ENCODE measurements at regions of chr13 and their contacts with region 1.

Region 1: GRCh38 chr13:77026818-77027585 is at the start of gene FBXL3:
- DNase-seq: peak; percentile 94
- ATAC-seq: peak; percentile 88
- total RNA-seq, gene FBXL3: 29.3 TPM

Region 2: DNA sequence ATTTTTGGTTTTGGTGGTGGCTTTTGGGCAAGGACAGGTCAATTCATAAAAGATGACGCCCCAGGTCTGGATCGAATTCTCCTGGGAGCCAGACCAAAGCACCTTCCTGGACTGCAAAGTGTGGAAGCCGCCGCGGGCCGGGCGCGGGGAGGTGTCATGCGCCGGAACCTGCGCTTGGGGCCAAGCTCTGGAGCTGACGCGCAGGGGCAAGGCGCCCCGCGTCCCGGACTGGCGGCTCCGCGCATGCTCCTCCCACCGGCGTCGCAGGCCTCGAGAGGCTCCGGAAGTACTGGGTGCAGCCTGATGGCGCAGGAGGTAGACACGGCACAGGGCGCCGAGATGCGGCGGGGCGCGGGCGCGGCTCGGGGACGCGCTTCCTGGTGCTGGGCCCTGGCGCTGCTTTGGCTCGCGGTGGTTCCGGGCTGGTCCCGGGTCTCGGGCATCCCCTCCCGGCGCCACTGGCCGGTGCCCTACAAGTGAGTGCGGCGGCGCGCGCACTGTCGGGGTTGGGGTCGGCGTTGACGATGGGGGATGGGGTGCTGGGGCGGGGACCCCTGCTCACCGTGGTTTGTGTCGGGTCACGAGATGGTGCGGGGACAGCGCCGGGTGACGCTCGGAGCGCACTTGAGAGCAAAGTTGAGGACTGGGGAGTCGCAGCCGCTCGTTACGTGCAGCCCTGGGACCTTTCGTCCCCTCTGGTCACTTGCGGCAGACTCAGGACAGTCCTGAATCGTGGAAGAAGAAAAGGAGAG is 35.0 kb before region 1 on chr13 and contains the start of gene CLN5:
- intact Hi-C with region 1: loop called (anchors 1 kb)
- DNase-seq: peak; percentile 97
- ATAC-seq: peak; percentile 99
- total RNA-seq, gene CLN5: 17.6 TPM